ENCODE measurements at regions of chr14 and their contacts with region 1.

Region 1: GRCh38 chr14:35365130-35366055 is 39.2 kb downstream of the NFKBIA start:
- DNase-seq: peak; percentile 84
- H3K4me3 ChIP-seq: no peak overlapping the region
- H3K27ac ChIP-seq: peak overlapping the region; percentile 31
- H3K4me1 ChIP-seq: peaks cover 27% of the 10 kb centered on the region
- H3K27me3 ChIP-seq: no peaks in the 10 kb centered on the region
- CTCF ChIP-seq: no peak
- POLR2A ChIP-seq: no peak

Region 2: GRCh38 chr14:35341446-35342159 is 23.8 kb before region 1 on chr14:
- CTCF ChIA-PET with region 1: interaction called, 7 read pairs
- POLR2A ChIA-PET with region 1: interaction called, 5 read pairs
- dilution Hi-C with region 1: no loop called
- intact Hi-C with region 1: loop called (anchors 2 kb)
- DNase-seq: peak; percentile 91
- H3K4me3 ChIP-seq: no peak overlapping the region
- H3K27ac ChIP-seq: no peak overlapping the region
- H3K4me1 ChIP-seq: peaks cover 20% of the 10 kb centered on the region
- H3K27me3 ChIP-seq: no peaks in the 10 kb centered on the region
- CTCF ChIP-seq: no peak
- POLR2A ChIP-seq: no peak